Breast epithelium (tissue), 4 donors: ENCODE measurements at regions of chr2 and their contacts with region 1.

Region 1: DNA sequence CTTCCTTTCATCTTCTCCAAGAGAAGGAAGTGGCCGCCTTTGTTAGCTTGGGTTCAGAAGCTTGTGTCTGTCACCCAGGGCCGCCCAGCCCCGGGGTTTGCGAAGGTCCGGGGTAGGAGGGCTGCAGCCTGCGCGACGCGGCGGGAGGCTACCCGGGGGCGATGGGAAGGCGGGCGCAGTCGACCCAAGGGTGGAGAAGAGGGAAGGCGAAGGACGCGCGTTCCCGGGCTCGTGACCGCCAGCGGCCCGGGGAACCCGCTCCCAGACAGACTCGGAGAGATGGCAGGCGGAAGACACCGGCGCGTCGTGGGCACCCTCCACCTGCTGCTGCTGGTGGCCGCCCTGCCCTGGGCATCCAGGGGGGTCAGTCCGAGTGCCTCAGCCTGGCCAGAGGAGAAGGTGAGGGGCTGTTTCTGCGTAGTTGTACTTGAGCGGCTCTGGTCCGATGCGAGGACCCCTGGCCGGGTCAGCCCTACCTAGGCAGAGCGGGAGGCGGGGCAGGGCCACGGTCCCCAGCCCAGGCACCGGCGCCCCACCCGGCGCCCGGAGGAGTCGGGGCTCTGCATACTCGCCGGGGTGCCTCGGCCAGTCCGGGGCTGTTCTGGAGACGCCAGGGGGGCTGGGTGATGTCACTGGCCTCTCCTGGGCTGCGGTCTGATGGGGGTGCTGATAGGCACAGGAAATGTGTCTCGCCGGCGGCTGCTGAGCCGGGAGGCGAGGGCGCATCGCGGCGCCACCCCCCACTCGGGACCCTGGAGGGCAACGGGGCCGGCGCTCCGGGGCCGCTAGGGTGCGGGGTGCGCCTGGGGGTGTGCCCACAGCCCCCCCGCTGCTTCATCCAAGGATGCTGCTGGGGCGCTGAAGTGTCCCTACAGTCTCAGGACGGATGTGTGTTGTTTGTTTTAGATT is at the start of gene QPCT:
- DNase-seq: peak in 1 of 2 donors; percentile 61
- H3K4me3 ChIP-seq: peak within 1 kb of the TSS; percentile 53 to 84 (median 61)
- H3K27ac ChIP-seq: peak within 1 kb of the TSS; percentile 53 to 83
- H3K4me1 ChIP-seq: peaks cover 0 to 3% of the 10 kb centered on the region in 2 donors
- H3K27me3 ChIP-seq: no peaks in the 10 kb centered on the region
- CTCF ChIP-seq: no peak
- POLR2A ChIP-seq: no peak
- total RNA-seq, gene QPCT: 3.7 to 12.5 (median 5.2) TPM

Region 2: DNA sequence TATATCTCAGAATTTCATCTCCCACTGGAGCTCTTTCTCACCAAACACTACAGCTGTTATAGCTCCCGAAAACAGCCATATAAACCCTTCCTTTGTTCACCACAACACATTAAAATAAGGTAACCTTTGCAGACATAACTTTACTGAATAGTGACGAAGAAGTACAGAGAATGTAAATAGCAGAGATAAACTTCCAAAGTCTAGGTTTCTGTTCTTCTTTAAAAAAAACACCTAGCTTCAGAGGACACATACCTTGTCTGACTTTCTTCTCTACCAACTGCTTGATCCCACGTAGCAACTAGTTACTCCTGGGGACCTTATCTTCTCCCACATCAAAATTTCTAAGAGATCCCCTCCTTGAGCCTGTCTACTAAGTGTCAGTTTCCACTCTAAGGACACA is 1000.1 kb after region 1 on chr2:
- intact Hi-C with region 1: loop called (anchors 5 kb)
- DNase-seq: no peak
- H3K4me3 ChIP-seq: no peak overlapping the region
- H3K27ac ChIP-seq: no peak overlapping the region
- H3K4me1 ChIP-seq: no peaks in the 10 kb centered on the region
- H3K27me3 ChIP-seq: no peaks in the 10 kb centered on the region
- CTCF ChIP-seq: no peak
- POLR2A ChIP-seq: no peak